HepG2 (cell line): ENCODE measurements at regions of chr1 and their contacts with region 1.

Region 1: DNA sequence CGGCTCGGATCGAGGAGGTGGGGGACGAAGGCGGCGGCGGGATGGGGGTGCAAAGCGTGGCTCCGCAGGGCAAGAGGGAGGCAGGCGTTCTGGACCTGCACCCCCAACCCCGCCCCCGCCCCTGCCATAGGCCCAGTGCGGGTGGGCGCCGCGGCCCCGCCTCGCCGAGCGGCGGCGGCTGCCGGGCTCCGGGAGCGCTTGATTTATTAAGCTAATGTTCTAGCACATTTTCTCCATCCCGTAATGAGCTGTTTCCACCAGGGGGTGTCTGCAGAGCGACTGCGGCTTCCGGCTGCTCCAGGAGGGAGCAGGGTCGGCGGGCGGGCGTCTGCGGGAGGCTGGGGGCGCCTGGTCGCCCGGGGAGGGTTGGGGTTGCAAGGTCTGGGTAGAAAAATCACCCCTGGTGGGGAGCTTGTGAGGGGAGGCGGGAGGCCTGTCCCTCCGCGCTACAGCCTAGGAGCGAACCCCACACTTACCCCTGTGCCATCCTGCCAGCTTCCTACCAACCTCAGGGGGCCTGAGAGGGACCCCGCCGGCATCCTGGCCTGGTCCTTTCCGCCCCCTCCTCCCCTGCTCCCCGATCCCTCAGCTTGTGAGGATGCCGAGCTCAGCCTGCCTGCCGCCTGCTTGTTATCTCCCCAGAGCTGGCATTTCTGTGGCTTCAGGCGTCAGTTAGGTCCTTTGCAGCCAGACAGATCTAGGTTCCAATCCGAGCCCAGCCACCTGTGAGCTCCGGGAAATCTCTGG is 48.5 kb upstream of the ACOT11 start:
- DNase-seq: no peak
- ATAC-seq: peak; percentile 86
- H3K4me3 ChIP-seq: peak overlapping the region; percentile 28 to 68 (median 38); a peak in 5 of 6 replicates
- H3K27ac ChIP-seq: no peak overlapping the region
- H3K4me1 ChIP-seq: peaks cover 23% of the 10 kb centered on the region
- H3K27me3 ChIP-seq: peaks cover 3 to 34% of the 10 kb centered on the region in 2 experiments; a peak in 4 of 5 replicates
- CTCF ChIP-seq: peak; percentile 53
- EP300 ChIP-seq: no peak
- POLR2A ChIP-seq: no peak
- RAD21 ChIP-seq: no peak

Region 2: DNA sequence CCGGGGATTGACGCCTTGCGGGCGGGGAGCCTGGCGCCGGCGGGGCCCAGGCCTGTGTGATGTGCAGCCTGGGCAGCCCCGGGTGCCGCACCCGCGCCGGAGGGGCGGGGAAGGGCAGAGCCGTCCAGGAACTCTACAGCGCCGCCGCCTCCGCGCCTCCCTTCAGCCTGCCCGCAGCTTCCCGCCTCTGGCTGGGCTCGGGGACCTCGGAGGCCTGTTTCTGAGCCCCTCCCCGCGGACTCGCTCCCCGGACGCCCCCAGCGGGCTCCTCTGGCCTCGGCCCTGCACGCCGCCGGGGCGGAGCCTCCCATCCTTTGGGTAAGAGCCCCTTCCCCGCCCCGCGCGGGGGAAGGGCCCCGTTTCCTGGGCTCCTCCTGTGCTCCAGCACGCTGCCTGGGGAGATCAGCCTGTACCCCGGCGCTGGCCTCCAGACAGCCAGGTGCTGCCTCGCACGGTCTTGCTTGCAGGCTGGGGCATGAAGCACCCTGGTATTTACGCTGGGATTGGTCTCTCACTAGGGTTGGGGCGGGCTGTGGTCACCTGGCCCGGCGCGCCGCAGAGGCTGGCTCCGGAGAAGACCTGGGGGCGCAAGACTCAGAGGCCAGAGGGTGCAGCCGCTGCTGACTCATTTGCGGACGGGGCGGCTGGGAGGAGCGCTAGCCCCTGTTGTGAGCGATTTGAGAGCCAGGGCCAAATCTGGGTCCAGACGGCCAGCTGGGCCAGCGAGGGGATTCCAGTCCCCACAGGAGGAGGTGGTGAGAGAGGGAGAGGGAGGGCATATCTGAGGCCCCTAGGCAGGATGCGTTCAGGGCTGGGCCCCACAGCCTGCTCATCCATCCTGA is 42.8 kb after region 1 on chr1:
- CTCF ChIA-PET with region 1: no interaction called
- POLR2A ChIA-PET with region 1: no interaction called
- in situ Hi-C with region 1: no loop called
- intact Hi-C with region 1: loop called (anchors 10 kb)
- DNase-seq: peak; percentile 81
- ATAC-seq: peak; percentile 93
- H3K4me3 ChIP-seq: peak overlapping the region; percentile 60 to 81 (median 68)
- H3K27ac ChIP-seq: peak overlapping the region; percentile 88
- H3K4me1 ChIP-seq: peaks cover 59% of the 10 kb centered on the region
- H3K27me3 ChIP-seq: no peaks in the 10 kb centered on the region
- CTCF ChIP-seq: peak; percentile 46
- EP300 ChIP-seq: no peak; a peak in 1 of 4 replicates
- POLR2A ChIP-seq: peak; percentile 45 to 64; a peak in 3 of 4 replicates
- RAD21 ChIP-seq: peak; percentile 59; the same call in 1 of the 2 replicates

Region 3: DNA sequence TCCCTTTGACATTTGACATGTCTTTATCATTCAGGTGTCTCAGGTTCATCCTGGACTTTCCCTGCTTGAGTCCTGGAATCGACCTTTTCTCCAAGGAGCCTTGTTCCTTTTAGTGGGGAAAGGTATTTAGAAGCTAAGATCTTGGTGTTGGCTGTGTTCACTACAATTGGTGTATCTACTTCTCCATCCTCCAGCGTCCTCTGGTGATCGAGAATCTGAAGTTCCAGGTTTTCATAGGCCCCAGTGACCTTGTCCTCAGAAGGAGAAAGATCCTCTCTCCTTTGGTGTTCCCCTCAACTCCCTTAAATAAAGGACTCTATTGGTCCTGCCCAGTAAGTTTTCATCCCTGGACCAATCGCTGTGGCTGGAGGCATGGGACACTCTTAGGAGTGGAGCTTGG is 164.2 kb after region 1 on chr1:
- CTCF ChIA-PET with region 1: no interaction called
- POLR2A ChIA-PET with region 1: no interaction called
- in situ Hi-C with region 1: no loop called
- intact Hi-C with region 1: loop called (anchors 5 kb)
- DNase-seq: no peak
- ATAC-seq: peak; percentile 25; the same call in 1 of the 3 replicates
- H3K4me3 ChIP-seq: no peak overlapping the region
- H3K27ac ChIP-seq: no peak overlapping the region
- H3K4me1 ChIP-seq: no peaks in the 10 kb centered on the region
- H3K27me3 ChIP-seq: no peaks in the 10 kb centered on the region; a peak in 1 of 5 replicates
- CTCF ChIP-seq: peak; percentile 51
- EP300 ChIP-seq: no peak
- POLR2A ChIP-seq: no peak
- RAD21 ChIP-seq: no peak